GM10248 (cell line): ENCODE measurements at regions of chr2 and their contacts with region 1.

Region 1: GRCh38 chr2:61255580-61256437 is 93.8 kb downstream of the C2orf74 start:
- DNase-seq: no peak
- CTCF ChIP-seq: no peak

Region 2: GRCh38 chr2:61268249-61268648 is 12.4 kb after region 1 on chr2:
- CTCF ChIA-PET with region 1: interaction called, 26 read pairs
- POLR2A ChIA-PET with region 1: no interaction called
- DNase-seq: no peak
- CTCF ChIP-seq: no peak